ENCODE measurements at regions of chr2 and their contacts with region 1.

Region 1: GRCh38 chr2:1421726-1422125 is 8.5 kb downstream of the TPO start:
- DNase-seq: no peak
- H3K4me3 ChIP-seq: no peak overlapping the region
- H3K27ac ChIP-seq: no peak overlapping the region
- H3K4me1 ChIP-seq: no peaks in the 10 kb centered on the region
- H3K27me3 ChIP-seq: no peaks in the 10 kb centered on the region
- CTCF ChIP-seq: no peak

Region 2: DNA sequence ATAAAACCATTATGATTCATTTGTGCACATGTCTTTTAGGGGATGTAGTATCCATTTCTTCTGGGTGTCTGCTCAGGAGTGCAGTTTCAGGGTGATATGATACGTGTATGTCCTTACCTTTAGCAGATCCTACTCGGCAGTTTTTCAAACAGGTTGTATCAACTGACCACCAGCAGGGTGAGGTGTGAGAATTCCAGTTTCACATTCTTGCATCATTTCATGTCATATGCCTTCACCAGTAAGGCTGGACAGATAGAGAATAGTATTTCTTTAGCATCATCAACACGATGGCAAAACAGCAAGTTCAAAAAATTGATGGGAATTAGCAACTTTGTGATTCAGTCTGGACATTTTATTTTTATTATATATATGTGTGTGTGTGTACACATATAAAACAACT is 238.4 kb before region 1 on chr2:
- CTCF ChIA-PET with region 1: no interaction called
- dilution Hi-C with region 1: no loop called
- in situ Hi-C with region 1: no loop called
- intact Hi-C with region 1: no loop called
- DNase-seq: no peak
- H3K4me3 ChIP-seq: no peak overlapping the region
- H3K27ac ChIP-seq: no peak overlapping the region
- H3K4me1 ChIP-seq: no peaks in the 10 kb centered on the region
- H3K27me3 ChIP-seq: no peaks in the 10 kb centered on the region
- CTCF ChIP-seq: no peak

Region 3: DNA sequence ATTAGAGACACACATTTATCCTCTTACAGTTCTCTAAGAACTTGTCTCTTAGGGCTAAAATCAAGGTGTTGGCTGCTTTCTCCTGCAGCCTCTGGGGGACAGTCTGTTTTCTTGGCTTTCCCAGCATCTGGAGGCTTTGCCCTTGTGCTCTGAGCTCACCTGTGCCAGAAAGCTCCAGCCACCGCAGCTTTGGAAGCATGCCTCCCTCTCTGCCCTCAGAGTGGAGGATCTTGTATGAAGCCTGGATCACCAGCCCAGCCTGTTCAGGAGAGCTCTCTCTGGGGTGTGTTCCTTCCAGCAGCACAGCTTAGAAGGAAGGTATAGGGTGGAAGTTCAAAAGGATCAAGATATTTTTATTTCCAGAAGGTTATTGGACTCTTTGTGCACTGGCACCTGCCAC is 61.6 kb before region 1 on chr2:
- CTCF ChIA-PET with region 1: no interaction called
- dilution Hi-C with region 1: loop called (anchors 5 kb)
- in situ Hi-C with region 1: no loop called
- intact Hi-C with region 1: no loop called
- DNase-seq: no peak
- H3K4me3 ChIP-seq: no peak overlapping the region
- H3K27ac ChIP-seq: no peak overlapping the region
- H3K4me1 ChIP-seq: no peaks in the 10 kb centered on the region
- H3K27me3 ChIP-seq: no peaks in the 10 kb centered on the region
- CTCF ChIP-seq: no peak

Measured in mammary epithelial cell (primary cell).